HepG2 (cell line): ENCODE measurements at regions of chr1 and their contacts with region 1.

Region 1: GRCh38 chr1:192977089-192977706 is 82.0 kb downstream of the UCHL5 start:
- DNase-seq: no peak
- ATAC-seq: no peak
- H3K4me3 ChIP-seq: no peak overlapping the region
- H3K27ac ChIP-seq: no peak overlapping the region
- H3K4me1 ChIP-seq: no peaks in the 10 kb centered on the region
- H3K27me3 ChIP-seq: no peaks in the 10 kb centered on the region; a peak in 1 of 5 replicates
- CTCF ChIP-seq: no peak
- EP300 ChIP-seq: no peak
- POLR2A ChIP-seq: no peak
- RAD21 ChIP-seq: no peak

Region 2: DNA sequence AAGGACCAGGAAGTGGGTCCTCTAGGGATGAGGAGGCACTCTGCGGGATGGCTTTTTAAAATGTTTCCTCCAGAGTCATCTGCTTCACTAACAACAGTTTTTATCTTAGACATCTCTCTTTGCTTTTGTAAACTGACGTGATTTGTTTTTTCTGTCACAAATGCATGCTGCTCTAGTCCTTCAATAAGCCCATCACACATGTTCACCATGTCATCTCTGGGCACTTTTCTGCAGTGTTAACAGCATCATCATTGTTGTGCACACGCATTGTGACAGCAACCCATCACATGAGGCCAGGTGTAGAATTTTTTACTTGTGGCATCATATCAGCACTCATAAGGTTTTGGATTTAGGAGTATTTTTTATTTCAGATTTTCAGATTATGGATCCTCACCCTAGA is 155.9 kb before region 1 on chr1:
- CTCF ChIA-PET with region 1: no interaction called
- POLR2A ChIA-PET with region 1: no interaction called
- in situ Hi-C with region 1: no loop called
- intact Hi-C with region 1: loop called (anchors 1 kb)
- DNase-seq: no peak
- ATAC-seq: no peak
- H3K4me3 ChIP-seq: no peak overlapping the region
- H3K27ac ChIP-seq: no peak overlapping the region
- H3K4me1 ChIP-seq: no peaks in the 10 kb centered on the region
- H3K27me3 ChIP-seq: no peaks in the 10 kb centered on the region
- CTCF ChIP-seq: no peak
- EP300 ChIP-seq: no peak
- POLR2A ChIP-seq: no peak
- RAD21 ChIP-seq: no peak